ENCODE measurements at regions of chr11 and their contacts with region 1.

Region 1: GRCh38 chr11:119481021-119481666 is 58.2 kb upstream of the THY1 start:
- DNase-seq: peak; percentile 69 to 90
- H3K4me3 ChIP-seq: no peak overlapping the region
- H3K4me1 ChIP-seq: no peaks in the 10 kb centered on the region
- H3K27me3 ChIP-seq: no peaks in the 10 kb centered on the region

Region 2: DNA sequence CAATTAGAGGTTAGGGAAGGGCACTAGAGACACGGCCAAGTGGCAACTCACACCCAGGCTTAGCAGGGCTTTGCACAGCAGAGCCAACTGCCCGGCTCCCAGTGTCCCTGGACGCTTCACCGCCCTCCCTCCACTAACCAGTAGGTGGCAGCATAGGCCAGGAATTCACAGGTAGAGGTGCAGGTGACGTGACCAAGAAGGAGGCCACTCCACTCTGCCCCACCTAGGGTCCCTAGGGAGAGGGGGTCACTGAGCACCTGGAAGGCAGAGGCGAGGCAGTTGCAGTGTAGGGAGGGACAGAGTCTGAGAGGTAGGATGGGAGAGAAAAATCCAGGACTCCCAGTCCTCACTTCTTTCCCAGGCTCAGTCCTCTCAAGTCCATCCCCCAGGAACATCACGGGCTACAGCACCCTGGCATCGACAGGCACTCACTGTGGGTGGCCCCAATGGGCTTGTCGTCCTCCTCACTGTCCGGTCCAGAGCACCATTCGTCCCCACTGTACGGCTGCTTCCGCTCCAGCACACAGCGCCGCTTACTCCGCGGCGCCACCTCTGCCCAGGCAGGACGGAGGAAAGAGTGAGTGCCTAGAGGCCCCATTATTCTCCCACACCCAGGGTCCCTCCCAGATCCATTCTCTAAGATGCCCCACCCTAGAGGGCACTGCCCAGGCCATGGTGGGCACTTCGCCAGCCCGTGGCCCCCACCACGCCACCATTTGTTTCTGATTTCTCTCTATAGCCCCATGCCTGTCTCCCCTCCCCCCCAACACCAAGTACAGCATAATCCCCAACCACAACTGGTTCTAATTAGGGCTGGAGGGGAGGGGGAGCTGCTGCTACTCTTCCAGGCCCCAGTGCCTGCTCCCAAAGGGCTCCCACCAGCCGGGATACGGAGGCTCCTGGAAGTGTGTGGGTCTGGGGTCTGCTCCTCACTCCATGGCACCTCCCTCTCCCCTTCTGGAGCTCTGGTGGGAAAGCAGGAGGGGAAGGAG is 573.8 kb before region 1 on chr11:
- in situ Hi-C with region 1: no loop called
- DNase-seq: peak; percentile 67 to 90
- H3K4me3 ChIP-seq: no peak overlapping the region
- H3K4me1 ChIP-seq: peaks cover 30% of the 10 kb centered on the region
- H3K27me3 ChIP-seq: no peaks in the 10 kb centered on the region

Region 3: DNA sequence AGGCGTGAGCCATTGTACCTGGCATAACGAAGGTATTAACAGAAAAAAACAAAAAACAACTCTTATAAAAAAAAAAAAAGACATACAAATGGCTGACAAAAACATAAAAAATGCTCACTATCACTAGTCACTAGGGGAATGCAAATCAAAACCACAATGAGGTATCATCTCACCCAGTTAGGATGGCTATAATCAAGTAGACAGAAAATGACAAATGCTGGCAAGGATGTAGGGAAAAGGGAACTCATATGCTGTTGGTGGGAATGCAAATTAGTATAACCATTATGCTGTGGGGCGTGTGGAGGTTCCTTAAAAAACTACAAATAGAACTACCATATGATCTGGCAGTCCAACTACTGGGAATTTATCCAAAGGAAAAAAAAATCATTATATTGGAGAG is 75.1 kb before region 1 on chr11:
- in situ Hi-C with region 1: no loop called
- DNase-seq: no peak
- H3K4me3 ChIP-seq: no peak overlapping the region
- H3K4me1 ChIP-seq: no peaks in the 10 kb centered on the region
- H3K27me3 ChIP-seq: no peaks in the 10 kb centered on the region

Region 4: GRCh38 chr11:119651802-119652584 is 170.8 kb after region 1 on chr11:
- in situ Hi-C with region 1: loop called (anchors 10 kb)
- DNase-seq: no peak
- H3K4me3 ChIP-seq: no peak overlapping the region
- H3K4me1 ChIP-seq: no peaks in the 10 kb centered on the region
- H3K27me3 ChIP-seq: no peaks in the 10 kb centered on the region

Region 5: DNA sequence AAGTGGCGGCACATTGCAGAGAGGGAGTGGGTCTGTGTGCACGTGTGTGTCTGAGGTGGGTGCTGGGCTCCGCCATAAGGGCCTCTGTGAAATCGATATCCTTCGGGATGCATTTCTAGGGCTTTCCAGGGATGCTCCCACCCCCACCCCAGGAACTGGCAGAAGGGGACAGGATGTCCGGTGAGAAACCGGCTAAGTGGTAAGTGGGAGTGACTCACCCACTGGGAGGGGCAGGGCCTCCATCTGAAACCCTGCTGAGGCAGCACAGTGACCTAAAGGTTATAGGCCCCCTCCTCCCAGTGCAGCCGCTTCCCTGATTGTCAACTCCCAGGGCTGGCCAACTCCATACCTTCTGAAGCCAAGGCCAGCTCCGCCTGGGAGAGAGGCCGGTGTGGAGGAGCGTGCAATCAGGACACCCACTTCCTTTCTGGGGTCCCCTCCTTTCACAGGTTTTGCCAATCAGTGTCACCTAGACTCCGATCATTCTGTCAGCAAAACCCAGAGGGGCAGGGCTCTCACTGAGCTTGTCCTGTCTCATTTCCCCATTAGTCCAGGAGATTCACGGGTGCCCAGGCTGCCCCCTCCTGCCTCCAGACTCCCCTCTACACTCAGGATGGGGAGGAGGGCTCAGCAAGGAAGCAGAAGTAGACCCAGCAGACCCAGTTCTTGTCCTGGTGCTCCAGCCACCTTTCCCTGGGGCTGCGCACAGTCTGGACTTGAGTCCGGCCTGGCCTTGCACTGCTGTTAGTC is 203.4 kb after region 1 on chr11:
- in situ Hi-C with region 1: no loop called
- DNase-seq: no peak
- H3K4me3 ChIP-seq: no peak overlapping the region
- H3K4me1 ChIP-seq: no peaks in the 10 kb centered on the region
- H3K27me3 ChIP-seq: no peaks in the 10 kb centered on the region

Region 6: DNA sequence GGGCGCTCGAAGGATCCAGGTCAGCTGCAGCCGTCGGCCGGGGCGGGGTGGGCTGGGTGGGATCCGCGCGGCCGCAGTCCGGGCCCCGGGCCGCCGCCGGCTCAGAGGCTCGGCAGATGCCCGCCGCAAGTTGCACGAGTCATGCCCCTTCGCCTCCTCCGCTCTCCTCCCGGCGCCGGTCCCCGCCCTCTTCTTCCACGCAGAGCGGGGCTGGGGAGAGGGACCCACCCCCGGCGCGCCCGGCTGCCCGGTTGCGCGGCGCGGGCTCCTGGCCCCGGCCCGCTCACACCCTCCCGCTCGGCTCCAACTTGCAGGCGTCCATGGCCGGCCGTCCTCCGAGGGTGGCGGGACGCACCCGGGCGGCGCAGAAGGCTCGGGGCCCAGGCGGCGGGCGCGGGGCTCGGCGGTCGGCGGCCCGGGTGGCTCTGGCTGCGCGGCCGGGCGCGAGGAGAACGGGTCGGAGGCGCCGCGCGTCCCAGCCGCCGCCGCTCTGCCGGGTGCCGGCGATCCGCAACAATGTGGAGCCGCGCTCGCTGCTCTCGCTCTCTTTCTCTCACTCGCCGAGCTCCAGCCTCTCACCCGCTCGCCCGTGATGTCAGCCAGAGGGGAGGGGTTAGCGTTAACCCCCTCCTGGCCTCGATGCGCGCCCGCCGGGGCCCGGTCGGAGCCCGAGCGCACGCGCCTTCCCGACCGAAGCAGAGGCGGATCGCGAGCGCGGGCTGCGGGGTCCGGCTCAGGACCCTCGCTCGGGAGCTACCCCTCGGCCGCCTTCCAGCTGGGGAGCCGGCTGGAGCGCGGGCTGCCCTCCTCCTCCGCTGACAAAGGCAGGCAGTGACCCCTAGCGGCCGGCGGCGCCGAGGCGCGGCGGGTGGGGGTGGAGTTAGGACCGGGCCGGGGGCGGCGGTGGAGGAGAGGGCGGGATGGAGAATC is 247.8 kb after region 1 on chr11 and contains the start of gene NECTIN1:
- in situ Hi-C with region 1: loop called (anchors 25 kb)
- DNase-seq: peak; percentile 79 to 94
- H3K4me3 ChIP-seq: peak within 1 kb of the TSS; percentile 71
- H3K4me1 ChIP-seq: peaks cover 15% of the 10 kb centered on the region
- H3K27me3 ChIP-seq: no peaks in the 10 kb centered on the region

Region 7: DNA sequence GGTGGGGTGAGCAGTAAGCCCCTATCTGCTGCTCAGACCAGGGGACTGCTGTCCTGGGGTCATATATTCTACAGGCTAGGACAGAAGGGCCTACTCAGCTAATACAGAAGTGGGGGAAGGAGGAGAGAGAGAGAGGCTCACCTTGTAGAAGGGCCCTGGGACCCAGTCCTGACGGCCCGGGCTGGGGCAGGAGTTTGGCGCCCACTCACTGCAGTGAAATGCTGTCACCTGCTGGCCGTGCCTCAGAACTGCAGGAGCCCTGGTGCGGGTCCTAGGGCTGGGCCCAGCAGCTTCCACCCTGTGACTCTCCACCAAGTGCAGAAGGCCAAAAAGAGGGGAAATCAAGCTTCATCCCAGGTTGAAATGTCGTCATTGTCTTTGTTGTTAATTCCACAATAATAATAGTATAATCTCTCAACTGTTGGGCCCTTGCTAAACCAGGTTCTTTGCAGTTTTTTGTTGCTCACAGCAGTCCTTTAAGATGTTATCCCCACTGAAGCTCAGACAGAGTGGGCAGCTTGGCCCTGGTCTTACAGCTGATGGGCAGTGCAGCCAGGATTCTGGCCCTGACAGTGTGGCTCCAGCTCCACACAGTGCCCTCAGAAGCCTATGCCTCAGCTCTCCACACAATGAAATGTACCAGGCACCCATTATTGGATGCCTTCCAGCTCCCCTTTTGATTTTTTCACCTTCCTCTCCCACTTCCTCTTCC is 627.2 kb after region 1 on chr11:
- in situ Hi-C with region 1: loop called (anchors 5 kb)
- DNase-seq: peak; percentile 37 to 83
- H3K4me3 ChIP-seq: no peak overlapping the region
- H3K4me1 ChIP-seq: no peaks in the 10 kb centered on the region
- H3K27me3 ChIP-seq: peaks cover 21% of the 10 kb centered on the region